Body of pancreas (tissue), 4 donors: ENCODE measurements at regions of chr3 and their contacts with region 1.

Region 1: DNA sequence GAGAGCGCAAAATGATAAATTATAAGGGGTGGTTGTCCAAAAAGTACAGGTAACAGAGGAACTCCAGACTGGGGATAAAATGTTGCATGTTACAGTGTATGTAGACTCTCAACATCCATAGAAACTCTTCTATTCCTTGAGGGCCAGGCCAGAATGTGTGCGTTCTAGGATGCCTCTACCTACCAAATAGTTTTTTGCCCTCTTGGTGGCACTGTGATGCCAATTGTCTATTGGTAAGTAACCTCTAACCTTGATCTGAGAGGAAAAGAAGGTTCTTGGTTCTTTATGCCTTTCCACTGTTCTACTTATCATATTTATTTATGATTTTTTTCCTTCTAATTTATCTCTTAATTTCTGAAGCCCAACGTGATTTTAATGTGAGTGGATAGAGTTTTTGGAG is 424.6 kb downstream of the GRM7 start:
- DNase-seq: peak; percentile 18 to 65 (median 32)
- ATAC-seq: no peak
- H3K4me3 ChIP-seq: no peak overlapping the region
- H3K27ac ChIP-seq: no peak overlapping the region
- H3K4me1 ChIP-seq: no peaks in the 10 kb centered on the region
- H3K27me3 ChIP-seq: no peaks in the 10 kb centered on the region
- CTCF ChIP-seq: peak in 6 of 7 experiments; percentile 18 to 54 (median 32)
- POLR2A ChIP-seq: no peak

Region 2: DNA sequence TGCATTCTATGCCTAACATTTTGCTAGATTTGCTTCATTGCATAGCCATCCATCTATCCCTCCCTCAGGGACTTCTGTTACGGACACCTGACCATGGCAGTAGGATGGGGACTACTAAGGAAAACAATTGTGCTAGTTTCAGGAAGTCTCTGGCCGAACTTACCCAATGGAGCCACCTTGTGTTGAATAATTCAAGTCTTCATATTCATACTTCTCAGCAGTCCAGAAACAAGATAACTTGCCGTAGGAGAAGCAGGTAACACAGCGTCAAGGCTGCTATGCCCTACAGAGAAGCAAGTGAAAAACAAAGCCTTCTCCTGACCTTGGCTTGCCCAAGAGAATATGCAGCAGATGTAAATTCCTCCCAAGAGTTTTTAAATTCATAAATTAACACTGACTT is 260.7 kb after region 1 on chr3:
- intact Hi-C with region 1: loop called (anchors 10 kb)
- DNase-seq: peak in 3 of 4 donors; percentile 16 to 25 (median 22)
- ATAC-seq: peak; percentile 50
- H3K4me3 ChIP-seq: no peak overlapping the region
- H3K27ac ChIP-seq: no peak overlapping the region
- H3K4me1 ChIP-seq: no peaks in the 10 kb centered on the region
- H3K27me3 ChIP-seq: no peaks in the 10 kb centered on the region
- CTCF ChIP-seq: peak in 5 of 7 experiments; percentile 14 to 61 (median 42)
- POLR2A ChIP-seq: no peak

Region 3: DNA sequence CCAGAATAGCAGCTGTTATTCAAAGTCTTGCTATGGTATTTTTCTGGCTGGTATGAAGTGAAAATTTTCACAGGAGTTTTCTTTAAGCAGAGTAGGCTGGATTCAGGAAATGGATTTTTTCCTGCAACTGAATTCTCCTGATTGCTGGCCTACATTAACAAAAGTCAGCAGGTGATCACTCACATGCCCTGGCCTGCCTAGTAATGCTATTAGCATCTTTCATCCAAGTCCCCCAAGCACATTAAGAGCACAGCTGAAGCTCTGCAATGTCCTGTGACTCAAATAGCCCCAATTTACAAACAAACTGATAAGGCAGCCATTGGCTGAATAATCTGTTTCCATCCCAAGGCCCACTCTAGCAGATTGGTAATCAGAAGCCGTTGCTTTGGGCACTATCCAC is 527.9 kb after region 1 on chr3:
- intact Hi-C with region 1: no loop called
- DNase-seq: no peak
- ATAC-seq: no peak
- H3K4me3 ChIP-seq: no peak overlapping the region
- H3K27ac ChIP-seq: no peak overlapping the region
- H3K4me1 ChIP-seq: no peaks in the 10 kb centered on the region
- H3K27me3 ChIP-seq: no peaks in the 10 kb centered on the region
- CTCF ChIP-seq: no peak
- POLR2A ChIP-seq: no peak